Left cardiac atrium (tissue), 4 donors: ENCODE measurements at regions of chr15 and their contacts with region 1.

Region 1: GRCh38 chr15:76667943-76668715 is 237.0 kb downstream of the SCAPER start:
- DNase-seq: no peak
- ATAC-seq: no peak

Region 2: DNA sequence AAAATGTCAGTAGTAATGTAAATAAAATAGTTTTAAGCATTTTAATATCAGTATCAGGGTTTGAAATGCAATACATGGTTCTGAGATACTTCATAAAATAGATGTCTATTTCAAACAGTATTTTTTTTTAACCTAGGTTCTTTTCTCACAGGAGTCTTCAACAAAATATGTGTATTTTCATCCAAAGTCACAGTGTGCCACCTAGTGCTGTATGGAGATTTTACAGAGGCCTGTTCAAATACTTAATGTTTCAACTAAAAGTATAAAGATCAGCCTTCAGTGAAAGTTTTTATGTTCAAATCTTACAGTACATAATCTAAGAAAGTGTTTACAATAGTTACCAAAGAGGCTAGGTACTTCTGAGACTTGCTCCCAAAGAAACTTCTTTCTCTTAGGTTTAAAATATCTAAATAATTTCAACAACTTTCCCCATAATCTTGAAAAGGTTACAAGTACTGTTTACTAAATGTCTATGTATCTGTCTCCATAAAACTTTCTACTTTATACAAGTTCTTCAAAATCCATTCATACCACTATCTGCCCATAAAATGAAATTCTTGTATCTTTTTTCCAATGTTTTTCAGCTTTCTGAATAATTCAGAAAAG is 198.7 kb after region 1 on chr15:
- intact Hi-C with region 1: loop called in 1 of 2 experiments (anchors 10 kb)
- DNase-seq: no peak
- ATAC-seq: peak in 1 of 2 donors; percentile 58